Transverse colon (tissue), 4 donors: ENCODE measurements at regions of chrX and their contacts with region 1.

Region 1: GRCh38 chrX:114611018-114611619 is 27.2 kb downstream of the HTR2C start:
- DNase-seq: peak; percentile 14
- H3K4me3 ChIP-seq: no peak overlapping the region
- H3K27ac ChIP-seq: no peak overlapping the region
- H3K4me1 ChIP-seq: no peaks in the 10 kb centered on the region
- H3K27me3 ChIP-seq: no peaks in the 10 kb centered on the region
- CTCF ChIP-seq: peak; percentile 41 to 88 (median 57)
- EP300 ChIP-seq: no peak
- POLR2A ChIP-seq: no peak

Region 2: GRCh38 chrX:114959729-114960128 is 348.6 kb after region 1 on chrX:
- in situ Hi-C with region 1: loop called in 1 of 4 experiments (anchors 25 kb)
- intact Hi-C with region 1: no loop called
- DNase-seq: no peak
- H3K4me3 ChIP-seq: no peak overlapping the region
- H3K27ac ChIP-seq: no peak overlapping the region
- H3K4me1 ChIP-seq: no peaks in the 10 kb centered on the region
- H3K27me3 ChIP-seq: no peaks in the 10 kb centered on the region
- CTCF ChIP-seq: peak in 3 of 5 experiments; percentile 12 to 33 (median 16)
- EP300 ChIP-seq: no peak
- POLR2A ChIP-seq: no peak

Region 3: GRCh38 chrX:115147220-115147619 is 536.1 kb after region 1 on chrX:
- in situ Hi-C with region 1: loop called in 1 of 4 experiments (anchors 25 kb)
- intact Hi-C with region 1: no loop called
- DNase-seq: no peak
- H3K4me3 ChIP-seq: no peak overlapping the region
- H3K27ac ChIP-seq: no peak overlapping the region
- H3K4me1 ChIP-seq: no peaks in the 10 kb centered on the region
- H3K27me3 ChIP-seq: no peaks in the 10 kb centered on the region
- CTCF ChIP-seq: peak in 4 of 5 experiments; percentile 26 to 49 (median 32)
- EP300 ChIP-seq: no peak
- POLR2A ChIP-seq: no peak

Region 4: GRCh38 chrX:115362334-115363095 is 751.4 kb after region 1 on chrX:
- in situ Hi-C with region 1: no loop called
- intact Hi-C with region 1: no loop called
- DNase-seq: no peak
- H3K4me3 ChIP-seq: no peak overlapping the region
- H3K27ac ChIP-seq: no peak overlapping the region
- H3K4me1 ChIP-seq: no peaks in the 10 kb centered on the region
- H3K27me3 ChIP-seq: no peaks in the 10 kb centered on the region
- CTCF ChIP-seq: no peak
- EP300 ChIP-seq: no peak
- POLR2A ChIP-seq: no peak